CD4-positive, alpha-beta memory T cell (primary cell): ENCODE measurements at regions of chr6 and their contacts with region 1.

Region 1: DNA sequence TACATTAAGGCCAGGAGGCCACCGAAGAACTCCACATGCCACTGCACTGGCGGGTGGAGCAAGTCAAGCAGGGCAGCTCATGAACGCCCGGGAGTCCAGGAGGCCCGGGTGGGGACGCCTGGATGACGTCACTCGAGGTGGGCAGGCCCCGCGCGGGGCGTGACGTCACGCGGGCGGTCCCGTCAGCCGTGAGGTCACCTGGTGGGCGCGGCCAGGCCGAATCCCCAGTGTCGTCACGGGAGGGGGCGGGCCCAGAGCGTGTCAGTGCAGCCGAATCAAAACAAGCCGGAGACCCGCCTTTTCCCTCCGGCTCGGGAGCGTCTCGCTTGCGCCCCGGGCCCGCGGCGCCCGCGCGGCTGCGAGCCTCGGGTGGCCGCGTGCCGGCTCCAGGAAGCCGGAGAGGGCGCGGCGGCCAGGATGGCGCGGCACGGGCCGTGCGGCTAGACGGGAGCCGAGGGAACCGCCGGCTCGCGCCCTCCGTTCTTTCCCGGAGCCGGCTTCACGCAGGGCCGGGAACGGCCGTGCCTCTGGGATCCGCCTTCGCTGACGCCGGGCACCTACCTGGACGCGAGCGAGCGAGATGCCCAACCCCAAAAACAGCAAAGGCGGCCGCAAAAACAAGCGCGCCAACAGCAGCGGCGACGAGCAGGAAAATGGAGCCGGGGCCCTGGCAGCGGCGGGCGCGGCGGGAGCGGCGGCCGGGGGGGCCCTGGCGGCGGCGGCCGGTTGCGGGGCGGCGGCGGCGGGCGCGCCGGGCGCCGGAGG is at the start of gene HECA:
- DNase-seq: peak; percentile 98 to 100 (median 99)
- H3K4me3 ChIP-seq: peak within 1 kb of the TSS; percentile 75 to 95
- H3K4me3 Mint-ChIP-seq: peak within 1 kb of the TSS; percentile 90 to 98 (median 95)
- H3K27ac ChIP-seq: peak within 1 kb of the TSS; percentile 97
- H3K27ac Mint-ChIP-seq: peak within 1 kb of the TSS; percentile 98 to 100 (median 99)
- H3K4me1 ChIP-seq: peaks cover 60% of the 10 kb centered on the region
- H3K4me1 Mint-ChIP-seq: peaks cover 48 to 84% (median 57%) of the 10 kb centered on the region in 4 donors
- H3K27me3 ChIP-seq: no peaks in the 10 kb centered on the region
- H3K27me3 Mint-ChIP-seq: no peaks in the 10 kb centered on the region
- total RNA-seq, gene HECA: 154 to 161 TPM

Region 2: DNA sequence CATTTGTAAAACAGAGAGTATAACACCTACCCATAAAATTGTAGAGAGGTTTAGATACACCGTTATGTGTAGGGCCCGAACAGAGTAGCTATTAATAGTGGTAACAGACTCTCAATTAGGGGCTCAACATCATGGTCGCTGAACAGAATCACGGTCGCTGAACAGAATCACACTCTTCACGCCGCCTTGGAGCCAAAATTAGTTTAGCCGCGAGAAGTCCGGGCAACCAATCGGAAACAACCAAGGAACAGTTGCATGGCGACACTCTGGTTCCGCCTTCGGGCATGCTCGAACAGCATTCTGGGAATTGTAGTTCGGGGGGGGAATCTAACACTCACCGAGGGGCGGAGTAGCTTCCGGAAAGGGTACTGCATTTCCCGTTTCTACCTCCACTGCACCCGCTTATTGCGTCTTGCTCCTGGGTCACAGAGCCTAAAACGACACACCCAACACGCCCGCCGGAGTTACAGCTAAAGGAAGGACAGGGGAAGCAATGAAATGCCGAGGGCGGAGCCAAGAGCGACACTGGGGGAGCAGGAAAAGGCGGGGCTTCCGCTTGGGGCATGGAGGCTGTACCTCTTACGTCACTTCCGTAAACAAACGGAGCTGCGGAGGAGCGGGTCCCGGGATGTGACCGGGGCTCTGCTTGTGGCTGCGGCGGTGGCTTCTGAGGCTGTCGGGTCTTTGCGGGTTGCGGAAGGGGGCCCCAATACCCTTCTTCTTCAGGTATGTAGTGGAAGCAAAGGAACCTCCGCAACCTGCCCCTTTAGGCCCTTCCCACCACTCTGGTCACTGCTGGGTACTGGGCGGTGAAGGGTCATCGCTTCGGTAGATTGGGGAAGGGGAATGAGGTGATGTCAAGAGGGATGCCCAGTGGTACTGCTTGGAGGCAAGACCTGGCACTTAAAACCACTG is 361.6 kb before region 1 on chr6 and contains the start of gene CCDC28A:
- CTCF ChIA-PET with region 1: no interaction called
- POLR2A ChIA-PET with region 1: no interaction called
- intact Hi-C with region 1: loop called (anchors 5 kb)
- DNase-seq: peak; percentile 96 to 98 (median 97)
- H3K4me3 ChIP-seq: peak within 1 kb of the TSS; percentile 72 to 99
- H3K4me3 Mint-ChIP-seq: peak within 1 kb of the TSS; percentile 91 to 100 (median 99)
- H3K27ac ChIP-seq: peak within 1 kb of the TSS; percentile 90
- H3K27ac Mint-ChIP-seq: peak within 1 kb of the TSS; percentile 97 to 100 (median 100)
- H3K4me1 ChIP-seq: peaks cover 18% of the 10 kb centered on the region
- H3K4me1 Mint-ChIP-seq: peaks cover 12 to 46% (median 26%) of the 10 kb centered on the region in 4 donors
- H3K27me3 ChIP-seq: no peaks in the 10 kb centered on the region
- H3K27me3 Mint-ChIP-seq: peaks cover 0 to 3% of the 10 kb centered on the region in 2 donors
- total RNA-seq, gene CCDC28A: 32.4 to 33.9 TPM

Region 3: GRCh38 chr6:139109558-139109957 is 25.4 kb before region 1 on chr6:
- CTCF ChIA-PET with region 1: interaction called, 11 read pairs
- POLR2A ChIA-PET with region 1: interaction called, 51 read pairs
- intact Hi-C with region 1: loop called (anchors 1 kb)
- DNase-seq: peak in 4 of 5 donors; percentile 11 to 30 (median 21)
- H3K4me3 ChIP-seq: no peak overlapping the region
- H3K4me3 Mint-ChIP-seq: peak overlapping the region in 2 of 8 donors; percentile 13 to 39
- H3K27ac ChIP-seq: no peak overlapping the region
- H3K27ac Mint-ChIP-seq: peak overlapping the region; percentile 3 to 87 (median 44)
- H3K4me1 ChIP-seq: peaks cover 50% of the 10 kb centered on the region
- H3K4me1 Mint-ChIP-seq: peaks cover 38 to 59% (median 51%) of the 10 kb centered on the region in 4 donors
- H3K27me3 ChIP-seq: no peaks in the 10 kb centered on the region
- H3K27me3 Mint-ChIP-seq: no peaks in the 10 kb centered on the region

Region 4: GRCh38 chr6:139153855-139154254 is 18.9 kb after region 1 on chr6:
- CTCF ChIA-PET with region 1: interaction called, 54 read pairs
- POLR2A ChIA-PET with region 1: interaction called, 169 read pairs
- intact Hi-C with region 1: no loop called
- DNase-seq: no peak
- H3K4me3 ChIP-seq: no peak overlapping the region
- H3K4me3 Mint-ChIP-seq: peak overlapping the region in 6 of 8 donors; percentile 1 to 66 (median 62)
- H3K27ac ChIP-seq: no peak overlapping the region
- H3K27ac Mint-ChIP-seq: peak overlapping the region in 5 of 7 donors; percentile 0 to 77 (median 32)
- H3K4me1 ChIP-seq: peaks cover 97% of the 10 kb centered on the region
- H3K4me1 Mint-ChIP-seq: peaks cover 70 to 88% (median 79%) of the 10 kb centered on the region in 4 donors
- H3K27me3 ChIP-seq: no peaks in the 10 kb centered on the region
- H3K27me3 Mint-ChIP-seq: no peaks in the 10 kb centered on the region

Region 5: DNA sequence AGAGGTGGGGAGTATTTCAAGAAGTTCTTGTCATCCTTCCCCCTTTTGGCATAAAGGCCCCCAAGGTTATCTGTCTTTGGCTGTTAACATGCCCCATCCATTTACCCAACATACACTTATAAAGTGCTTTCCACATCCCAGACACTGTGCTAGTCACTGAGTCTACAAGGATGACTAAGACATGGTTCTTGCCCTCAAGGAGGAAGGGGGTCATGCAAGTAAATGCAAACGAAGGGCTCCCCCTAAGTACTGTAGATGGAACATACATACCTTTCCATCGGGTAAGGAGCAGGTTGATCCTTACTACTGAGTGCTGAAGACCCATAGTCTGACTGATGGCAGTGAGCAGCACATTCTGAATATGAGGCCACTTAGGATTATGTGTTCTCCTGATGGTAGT is 38.2 kb after region 1 on chr6:
- CTCF ChIA-PET with region 1: interaction called, 13 read pairs
- POLR2A ChIA-PET with region 1: interaction called, 51 read pairs
- intact Hi-C with region 1: loop called (anchors 1 kb)
- DNase-seq: peak in 3 of 5 donors; percentile 24 to 61 (median 25)
- H3K4me3 ChIP-seq: no peak overlapping the region
- H3K4me3 Mint-ChIP-seq: peak overlapping the region in 7 of 8 donors; percentile 20 to 69 (median 53)
- H3K27ac ChIP-seq: no peak overlapping the region
- H3K27ac Mint-ChIP-seq: peak overlapping the region; percentile 29 to 88 (median 77)
- H3K4me1 ChIP-seq: peaks cover 97% of the 10 kb centered on the region
- H3K4me1 Mint-ChIP-seq: peaks cover 81 to 93% (median 89%) of the 10 kb centered on the region in 4 donors
- H3K27me3 ChIP-seq: no peaks in the 10 kb centered on the region
- H3K27me3 Mint-ChIP-seq: no peaks in the 10 kb centered on the region

Region 6: DNA sequence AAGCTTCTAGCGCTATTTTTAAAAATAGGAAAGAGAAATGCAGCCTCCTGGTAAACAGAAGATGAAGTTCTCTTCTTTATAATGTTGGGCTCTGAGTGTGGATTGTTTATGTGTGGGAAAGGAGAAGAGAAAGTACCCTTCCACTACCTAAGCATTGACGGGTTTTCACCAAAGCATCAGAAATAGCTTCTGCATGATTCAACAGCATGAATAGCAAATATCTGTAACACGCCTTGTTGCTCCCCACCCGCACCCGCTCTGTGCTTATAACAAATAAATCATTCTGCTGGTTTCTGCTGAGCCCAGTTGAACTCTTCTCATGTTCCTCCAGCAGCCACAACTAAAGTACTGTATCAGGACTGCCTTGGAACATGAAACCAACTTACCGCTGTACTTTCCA is 136.1 kb after region 1 on chr6:
- CTCF ChIA-PET with region 1: no interaction called
- POLR2A ChIA-PET with region 1: no interaction called
- intact Hi-C with region 1: no loop called
- DNase-seq: no peak
- H3K4me3 ChIP-seq: no peak overlapping the region
- H3K4me3 Mint-ChIP-seq: no peak overlapping the region
- H3K27ac ChIP-seq: no peak overlapping the region
- H3K27ac Mint-ChIP-seq: peak overlapping the region in 1 of 7 donors; percentile 29
- H3K4me1 ChIP-seq: no peaks in the 10 kb centered on the region
- H3K4me1 Mint-ChIP-seq: peaks cover 0 to 4% (median 1%) of the 10 kb centered on the region in 4 donors
- H3K27me3 ChIP-seq: no peaks in the 10 kb centered on the region
- H3K27me3 Mint-ChIP-seq: no peaks in the 10 kb centered on the region

Region 7: GRCh38 chr6:139323511-139324300 is 188.7 kb after region 1 on chr6:
- CTCF ChIA-PET with region 1: no interaction called
- POLR2A ChIA-PET with region 1: interaction called, 11 read pairs
- intact Hi-C with region 1: no loop called
- DNase-seq: peak; percentile 86 to 91 (median 89)
- H3K4me3 ChIP-seq: peak overlapping the region; percentile 33 to 61
- H3K4me3 Mint-ChIP-seq: peak overlapping the region; percentile 78 to 92 (median 88)
- H3K27ac ChIP-seq: peak overlapping the region; percentile 87
- H3K27ac Mint-ChIP-seq: peak overlapping the region; percentile 98 to 100 (median 98)
- H3K4me1 ChIP-seq: peaks cover 35% of the 10 kb centered on the region
- H3K4me1 Mint-ChIP-seq: peaks cover 21 to 43% (median 34%) of the 10 kb centered on the region in 4 donors
- H3K27me3 ChIP-seq: no peaks in the 10 kb centered on the region
- H3K27me3 Mint-ChIP-seq: no peaks in the 10 kb centered on the region

Region 8: DNA sequence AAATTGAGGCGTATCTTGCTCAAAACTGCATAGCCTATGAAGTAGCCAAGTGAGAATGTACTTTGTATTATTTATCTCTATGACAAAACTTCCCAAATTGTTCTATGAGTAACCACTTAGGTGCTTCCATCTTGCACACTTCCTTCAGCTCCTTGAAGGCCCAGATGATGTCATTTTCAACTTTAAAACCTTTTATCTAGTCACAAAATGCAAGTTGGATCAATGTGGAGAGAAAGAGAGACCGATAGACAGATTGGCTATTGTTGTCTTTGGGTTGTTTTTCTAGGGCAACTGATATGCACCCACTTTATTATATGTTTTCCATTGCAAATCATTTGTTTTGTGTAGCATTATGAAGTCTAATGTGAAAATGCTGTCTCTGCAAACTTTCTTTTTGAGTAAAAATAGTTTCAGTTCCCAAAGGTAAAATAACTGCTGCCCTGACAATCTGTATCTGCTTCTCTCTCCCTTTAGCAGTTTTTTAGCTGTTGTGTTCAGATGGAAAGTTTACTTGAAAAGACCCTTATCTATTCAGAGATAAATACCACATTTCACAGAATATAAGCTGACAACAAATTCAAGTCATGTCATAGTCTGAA is 313.2 kb after region 1 on chr6:
- CTCF ChIA-PET with region 1: no interaction called
- POLR2A ChIA-PET with region 1: no interaction called
- intact Hi-C with region 1: no loop called
- DNase-seq: no peak
- H3K4me3 ChIP-seq: no peak overlapping the region
- H3K4me3 Mint-ChIP-seq: no peak overlapping the region
- H3K27ac ChIP-seq: no peak overlapping the region
- H3K27ac Mint-ChIP-seq: no peak overlapping the region
- H3K4me1 ChIP-seq: no peaks in the 10 kb centered on the region
- H3K4me1 Mint-ChIP-seq: peaks cover 0 to 2% (median 0%) of the 10 kb centered on the region in 4 donors
- H3K27me3 ChIP-seq: no peaks in the 10 kb centered on the region
- H3K27me3 Mint-ChIP-seq: no peaks in the 10 kb centered on the region